Activated CD4-positive, alpha-beta T cell treated with anti-CD3 and anti-CD28 coated beads for 36 hours (primary cell): ENCODE measurements at regions of chr4 and their contacts with region 1.

Region 1: GRCh38 chr4:168514249-168514852 is 17.5 kb downstream of the PALLD start:
- DNase-seq: no peak
- ATAC-seq: no peak
- H3K4me3 Mint-ChIP-seq: no peak overlapping the region
- H3K27ac Mint-ChIP-seq: no peak overlapping the region
- H3K4me1 Mint-ChIP-seq: peaks cover 33% of the 10 kb centered on the region
- H3K27me3 Mint-ChIP-seq: no peaks in the 10 kb centered on the region

Region 2: DNA sequence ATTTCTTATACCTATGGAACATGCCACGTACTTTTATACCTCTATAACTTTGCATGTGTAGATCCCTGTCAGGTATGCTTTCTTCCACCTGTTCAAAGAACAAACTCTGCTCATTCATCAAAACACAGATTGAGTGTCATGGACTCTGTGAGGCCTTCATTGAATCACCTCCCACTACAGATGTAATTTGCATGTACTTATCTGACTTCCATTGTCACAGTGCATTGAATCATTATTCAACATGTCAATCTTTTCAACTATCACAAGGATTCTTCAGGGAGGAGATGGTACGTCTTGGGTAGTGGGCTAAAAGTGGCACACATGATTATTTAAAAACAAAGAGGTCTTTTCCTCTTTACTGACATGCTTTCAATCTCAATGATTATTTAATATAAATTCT is 1304.2 kb before region 1 on chr4:
- CTCF ChIA-PET with region 1: no interaction called
- POLR2A ChIA-PET with region 1: no interaction called
- intact Hi-C with region 1: no loop called
- DNase-seq: no peak
- ATAC-seq: no peak
- H3K4me3 Mint-ChIP-seq: no peak overlapping the region
- H3K27ac Mint-ChIP-seq: no peak overlapping the region
- H3K4me1 Mint-ChIP-seq: no peaks in the 10 kb centered on the region
- H3K27me3 Mint-ChIP-seq: no peaks in the 10 kb centered on the region

Region 3: DNA sequence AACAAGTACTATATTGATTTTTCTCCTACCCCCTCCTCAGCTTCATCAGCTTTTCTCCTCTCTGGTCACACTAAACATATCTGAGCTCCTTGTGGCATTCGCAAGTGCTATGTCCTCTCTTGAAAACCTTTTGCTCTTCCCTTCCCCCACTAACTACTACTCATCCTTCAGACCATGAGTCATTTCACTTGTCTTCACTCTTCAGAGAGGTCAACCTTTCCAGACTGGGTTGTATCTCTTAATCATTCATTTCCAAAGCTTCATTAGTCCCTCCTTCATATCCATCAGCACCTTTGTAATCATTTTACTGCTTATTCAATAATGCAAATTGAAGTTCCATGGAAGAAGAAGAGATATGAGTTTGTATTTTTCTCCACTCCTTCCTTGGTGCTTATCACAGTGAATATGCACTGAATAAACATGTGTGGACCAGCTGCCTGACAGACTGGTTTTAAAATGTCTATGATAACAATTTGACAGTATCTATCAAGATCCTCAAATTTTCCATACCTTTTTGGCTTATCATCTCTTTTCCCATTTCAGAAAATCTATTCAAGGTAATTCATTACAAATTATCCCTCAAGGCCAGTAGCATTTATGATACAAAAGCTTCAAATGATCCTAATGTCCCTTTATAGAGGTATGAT is 62.5 kb before region 1 on chr4:
- CTCF ChIA-PET with region 1: no interaction called
- POLR2A ChIA-PET with region 1: no interaction called
- intact Hi-C with region 1: loop called (anchors 1 to 2 kb)
- DNase-seq: no peak
- ATAC-seq: peak; percentile 89
- H3K4me3 Mint-ChIP-seq: no peak overlapping the region
- H3K27ac Mint-ChIP-seq: peak overlapping the region; percentile 79
- H3K4me1 Mint-ChIP-seq: peaks cover 32% of the 10 kb centered on the region
- H3K27me3 Mint-ChIP-seq: no peaks in the 10 kb centered on the region

Region 4: GRCh38 chr4:168540086-168540865 is 25.9 kb after region 1 on chr4:
- CTCF ChIA-PET with region 1: interaction called, 9 read pairs
- POLR2A ChIA-PET with region 1: no interaction called
- intact Hi-C with region 1: loop called in 1 of 2 experiments (anchors 1 kb)
- DNase-seq: peak; percentile 30
- ATAC-seq: peak; percentile 91
- H3K4me3 Mint-ChIP-seq: no peak overlapping the region
- H3K27ac Mint-ChIP-seq: no peak overlapping the region
- H3K4me1 Mint-ChIP-seq: peaks cover 11% of the 10 kb centered on the region
- H3K27me3 Mint-ChIP-seq: peaks cover 7% of the 10 kb centered on the region

Region 5: GRCh38 chr4:168710353-168710946 is 196.1 kb after region 1 on chr4:
- CTCF ChIA-PET with region 1: no interaction called
- POLR2A ChIA-PET with region 1: no interaction called
- intact Hi-C with region 1: loop called in 1 of 2 experiments (anchors 5 kb)
- DNase-seq: peak; percentile 28
- ATAC-seq: no peak
- H3K4me3 Mint-ChIP-seq: no peak overlapping the region
- H3K27ac Mint-ChIP-seq: no peak overlapping the region
- H3K4me1 Mint-ChIP-seq: peaks cover 15% of the 10 kb centered on the region
- H3K27me3 Mint-ChIP-seq: no peaks in the 10 kb centered on the region

Region 6: GRCh38 chr4:168955674-168956073 is 441.3 kb after region 1 on chr4:
- CTCF ChIA-PET with region 1: no interaction called
- POLR2A ChIA-PET with region 1: no interaction called
- intact Hi-C with region 1: no loop called
- DNase-seq: no peak
- ATAC-seq: no peak
- H3K4me3 Mint-ChIP-seq: no peak overlapping the region
- H3K27ac Mint-ChIP-seq: no peak overlapping the region
- H3K4me1 Mint-ChIP-seq: no peaks in the 10 kb centered on the region
- H3K27me3 Mint-ChIP-seq: no peaks in the 10 kb centered on the region

Region 7: DNA sequence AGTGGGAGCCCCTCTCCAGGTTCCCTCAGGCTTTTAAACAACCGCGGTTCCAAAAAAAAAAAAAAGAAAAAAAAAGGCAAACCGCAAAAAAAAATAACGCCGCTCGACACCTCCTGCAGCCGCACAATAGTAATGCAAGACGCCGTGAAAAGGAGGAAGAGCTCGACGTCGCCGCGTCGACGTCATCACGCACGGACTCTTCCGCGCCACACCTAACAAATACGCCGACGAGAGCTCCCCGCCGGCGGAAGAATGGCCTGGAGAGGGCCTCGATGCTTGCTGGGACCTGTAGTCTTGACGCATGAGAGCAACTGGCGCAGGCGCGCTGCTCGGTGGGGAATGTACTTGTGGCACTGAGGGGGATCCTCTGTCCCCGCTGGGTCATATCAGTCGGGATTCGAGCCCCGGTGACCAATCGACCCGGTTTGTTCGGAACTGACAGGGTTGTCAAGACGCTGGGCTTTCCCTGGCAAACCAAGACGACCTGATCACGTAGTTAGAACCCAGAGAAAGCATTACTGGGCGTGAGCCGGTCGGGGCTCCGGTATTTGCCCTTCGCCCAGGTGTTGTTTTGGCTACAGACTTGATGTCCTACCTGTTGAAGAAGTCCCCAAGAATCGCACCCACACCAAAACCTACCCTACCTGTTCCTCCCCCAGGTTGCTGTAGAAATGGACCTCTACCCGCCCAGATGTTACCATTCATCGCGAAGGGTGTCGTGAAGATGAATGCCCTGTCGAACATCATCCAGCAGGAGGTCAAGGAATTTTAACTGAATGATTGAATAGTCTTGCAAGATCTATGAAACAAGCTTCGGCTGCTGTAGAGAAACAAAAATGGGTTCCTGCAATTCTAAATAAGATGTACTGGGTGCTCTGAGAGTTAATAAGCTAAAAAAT is 496.0 kb after region 1 on chr4 and contains the start of gene CBR4:
- CTCF ChIA-PET with region 1: interaction called, 3 read pairs
- POLR2A ChIA-PET with region 1: no interaction called
- intact Hi-C with region 1: loop called in 1 of 2 experiments (anchors 2 kb)
- DNase-seq: peak; percentile 97
- ATAC-seq: peak; percentile 99
- H3K4me3 Mint-ChIP-seq: peak within 1 kb of the TSS; percentile 84
- H3K27ac Mint-ChIP-seq: peak within 1 kb of the TSS; percentile 87
- H3K4me1 Mint-ChIP-seq: peaks cover 26% of the 10 kb centered on the region
- H3K27me3 Mint-ChIP-seq: no peaks in the 10 kb centered on the region
- total RNA-seq, gene CBR4: 14.4 to 23.7 TPM